ENCODE measurements at regions of chr5 and their contacts with region 1.

Region 1: GRCh38 chr5:67003935-67004729 is 192.5 kb downstream of the CD180 start:
- DNase-seq: peak; percentile 89 to 92
- H3K4me3 ChIP-seq: peak overlapping the region; percentile 85
- H3K27ac ChIP-seq: peak overlapping the region; percentile 93
- H3K4me1 ChIP-seq: peaks cover 66% of the 10 kb centered on the region
- H3K27me3 ChIP-seq: no peaks in the 10 kb centered on the region
- CTCF ChIP-seq: no peak

Region 2: GRCh38 chr5:66807743-66808142 is 196.4 kb before region 1 on chr5:
- CTCF ChIA-PET with region 1: no interaction called
- POLR2A ChIA-PET with region 1: no interaction called
- intact Hi-C with region 1: loop called (anchors 5 kb)
- DNase-seq: peak; percentile 32 to 79
- H3K4me3 ChIP-seq: no peak overlapping the region
- H3K27ac ChIP-seq: no peak overlapping the region
- H3K4me1 ChIP-seq: peaks cover 4% of the 10 kb centered on the region; the same call in 1 of the 2 replicates
- H3K27me3 ChIP-seq: no peaks in the 10 kb centered on the region
- CTCF ChIP-seq: peak; percentile 58

Region 3: GRCh38 chr5:66828548-66829357 is 175.4 kb before region 1 on chr5:
- CTCF ChIA-PET with region 1: no interaction called
- POLR2A ChIA-PET with region 1: no interaction called
- intact Hi-C with region 1: loop called (anchors 5 kb)
- DNase-seq: peak; percentile 34 to 78
- H3K4me3 ChIP-seq: no peak overlapping the region; the same call in 1 of the 2 replicates
- H3K27ac ChIP-seq: no peak overlapping the region
- H3K4me1 ChIP-seq: peaks cover 26% of the 10 kb centered on the region
- H3K27me3 ChIP-seq: no peaks in the 10 kb centered on the region
- CTCF ChIP-seq: no peak

Region 4: DNA sequence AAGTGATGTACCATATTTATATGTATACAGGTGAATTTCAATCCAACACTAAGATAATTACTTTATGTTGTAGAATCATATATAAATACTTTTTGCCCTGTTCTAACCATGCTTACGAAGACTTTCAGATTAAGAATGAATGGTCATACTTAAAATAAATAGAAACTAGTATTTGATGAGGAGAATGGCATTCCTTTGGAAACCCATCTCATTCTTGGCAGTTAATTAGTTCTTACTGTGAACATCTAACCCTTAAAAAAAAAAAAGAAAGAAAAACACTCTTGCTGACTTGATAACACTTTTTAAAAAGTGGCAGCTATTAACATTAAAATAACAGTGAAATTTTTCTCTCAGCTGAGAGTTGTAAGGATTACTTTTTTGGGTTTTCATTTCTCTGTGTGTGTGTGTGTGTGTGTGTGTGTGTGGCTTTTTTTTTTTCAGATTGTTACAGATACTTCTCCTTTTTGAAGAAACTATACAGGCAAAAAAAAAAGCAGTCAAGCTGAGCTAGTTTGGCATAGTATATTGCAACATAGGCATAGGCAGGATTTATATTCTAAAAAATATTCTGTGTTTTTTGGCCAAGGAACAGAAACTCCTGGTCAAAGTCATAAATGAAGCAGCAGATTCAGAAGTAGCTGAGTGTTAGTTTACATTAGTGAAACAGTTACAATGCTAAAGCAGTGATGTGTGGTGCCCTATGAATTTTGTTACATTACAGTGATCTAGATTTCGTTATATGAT is 29.0 kb after region 1 on chr5:
- CTCF ChIA-PET with region 1: no interaction called
- POLR2A ChIA-PET with region 1: interaction called, 15 read pairs
- intact Hi-C with region 1: no loop called
- DNase-seq: no peak
- H3K4me3 ChIP-seq: no peak overlapping the region
- H3K27ac ChIP-seq: no peak overlapping the region
- H3K4me1 ChIP-seq: peaks cover 13% of the 10 kb centered on the region
- H3K27me3 ChIP-seq: no peaks in the 10 kb centered on the region
- CTCF ChIP-seq: no peak

Region 5: GRCh38 chr5:67095346-67096171 is 91.4 kb after region 1 on chr5:
- CTCF ChIA-PET with region 1: no interaction called
- POLR2A ChIA-PET with region 1: interaction called, 12 read pairs
- intact Hi-C with region 1: no loop called
- DNase-seq: no peak
- H3K4me3 ChIP-seq: no peak overlapping the region
- H3K27ac ChIP-seq: no peak overlapping the region
- H3K4me1 ChIP-seq: 0 out of 2 replicates have a peak, but pooled peaks cover 7% of the 10 kb centered on the region
- H3K27me3 ChIP-seq: no peaks in the 10 kb centered on the region
- CTCF ChIP-seq: no peak